Thyroid gland (tissue), 4 donors: ENCODE measurements at regions of chr3 and their contacts with region 1.

Region 1: GRCh38 chr3:139970526-139970925 is 35.5 kb downstream of the CLSTN2 start:
- DNase-seq: no peak
- H3K4me3 ChIP-seq: no peak overlapping the region
- H3K27ac ChIP-seq: no peak overlapping the region
- H3K4me1 ChIP-seq: no peaks in the 10 kb centered on the region
- H3K27me3 ChIP-seq: no peaks in the 10 kb centered on the region
- CTCF ChIP-seq: no peak
- POLR2A ChIP-seq: no peak

Region 2: DNA sequence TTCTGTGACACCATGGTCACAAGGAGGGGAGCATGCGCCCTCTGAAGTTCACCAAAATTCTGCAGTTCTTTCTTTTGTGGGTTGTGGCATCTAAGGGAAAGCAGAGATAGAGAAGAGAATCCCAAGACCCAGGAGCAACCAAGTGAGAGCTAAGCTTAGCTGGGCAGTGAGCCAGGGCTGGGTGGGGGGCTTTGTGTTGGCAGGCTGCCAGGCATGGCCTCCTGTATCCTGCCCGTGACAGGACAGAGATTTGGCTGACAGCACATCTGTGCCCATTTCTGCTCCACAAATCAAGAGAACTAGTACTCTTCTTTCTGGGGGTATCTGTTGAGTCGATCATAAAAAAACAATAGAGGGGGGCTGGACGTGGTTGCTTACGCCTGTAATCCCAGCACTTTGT is 359.0 kb before region 1 on chr3:
- intact Hi-C with region 1: no loop called
- DNase-seq: no peak
- H3K4me3 ChIP-seq: no peak overlapping the region
- H3K27ac ChIP-seq: no peak overlapping the region
- H3K4me1 ChIP-seq: no peaks in the 10 kb centered on the region
- H3K27me3 ChIP-seq: no peaks in the 10 kb centered on the region
- CTCF ChIP-seq: no peak
- POLR2A ChIP-seq: no peak

Region 3: DNA sequence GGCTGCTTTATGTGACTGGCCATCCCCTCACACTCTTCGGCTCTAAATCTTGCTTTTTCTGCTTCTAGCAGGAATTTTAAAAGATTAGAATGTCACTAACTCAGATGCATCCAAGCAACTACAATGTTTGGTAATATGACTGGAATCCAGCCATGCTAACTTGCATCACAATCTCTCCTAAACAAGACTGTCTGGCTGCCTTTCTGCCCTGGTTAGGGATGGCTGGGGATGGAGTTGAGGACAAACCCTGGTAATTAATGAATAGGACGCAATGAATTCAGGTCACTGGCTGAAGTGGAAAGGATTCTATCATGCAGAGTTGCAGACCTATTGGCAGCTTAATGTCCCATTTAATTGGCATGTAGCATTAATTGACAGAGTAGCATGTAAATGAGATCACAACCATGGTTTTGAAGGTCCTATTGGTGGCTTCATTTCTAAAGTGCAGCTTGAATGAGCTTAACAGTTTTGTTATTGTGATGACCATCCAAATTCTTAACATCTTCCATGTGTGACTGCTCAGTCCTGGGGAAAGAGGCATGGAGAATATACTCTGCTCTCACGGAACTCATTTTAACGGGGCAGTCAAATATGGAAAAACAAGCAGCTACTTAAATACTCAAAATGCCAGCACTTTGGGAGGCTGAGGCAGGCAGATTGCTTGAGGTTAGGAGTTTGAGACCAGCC is 314.5 kb before region 1 on chr3:
- intact Hi-C with region 1: no loop called
- DNase-seq: peak; percentile 33 to 58
- H3K4me3 ChIP-seq: no peak overlapping the region
- H3K27ac ChIP-seq: peak overlapping the region in 2 of 3 donors; percentile 12 to 48
- H3K4me1 ChIP-seq: peaks cover 14 to 29% of the 10 kb centered on the region in 2 donors
- H3K27me3 ChIP-seq: no peaks in the 10 kb centered on the region
- CTCF ChIP-seq: no peak
- POLR2A ChIP-seq: no peak

Region 4: DNA sequence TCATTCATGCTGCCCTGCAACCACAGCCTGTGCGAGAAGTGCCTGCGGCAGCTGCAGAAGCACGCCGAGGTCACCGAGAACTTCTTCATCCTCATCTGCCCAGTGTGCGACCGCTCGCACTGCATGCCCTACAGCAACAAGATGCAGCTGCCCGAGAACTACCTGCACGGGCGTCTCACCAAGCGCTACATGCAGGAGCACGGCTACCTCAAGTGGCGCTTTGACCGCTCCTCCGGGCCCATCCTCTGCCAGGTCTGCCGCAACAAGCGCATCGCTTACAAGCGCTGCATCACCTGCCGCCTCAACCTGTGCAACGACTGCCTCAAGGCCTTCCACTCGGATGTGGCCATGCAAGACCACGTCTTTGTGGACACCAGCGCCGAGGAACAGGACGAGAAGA is 712.1 kb after region 1 on chr3:
- intact Hi-C with region 1: loop called (anchors 5 kb)
- DNase-seq: no peak
- H3K4me3 ChIP-seq: no peak overlapping the region
- H3K27ac ChIP-seq: no peak overlapping the region
- H3K4me1 ChIP-seq: no peaks in the 10 kb centered on the region
- H3K27me3 ChIP-seq: no peaks in the 10 kb centered on the region
- CTCF ChIP-seq: no peak
- POLR2A ChIP-seq: no peak